Heart right ventricle (tissue), 16 donors: ENCODE measurements at regions of chr6 and their contacts with region 1.

Region 1: GRCh38 chr6:157191067-157191466 is 132.3 kb downstream of the TMEM242 start:
- DNase-seq: no peak
- ATAC-seq: no peak
- H3K4me3 ChIP-seq: no peak overlapping the region
- H3K27ac ChIP-seq: no peak overlapping the region
- H3K4me1 ChIP-seq: peaks cover 0 to 23% (median 15%) of the 10 kb centered on the region in 9 donors
- H3K27me3 ChIP-seq: no peaks in the 10 kb centered on the region
- CTCF ChIP-seq: no peak

Region 2: DNA sequence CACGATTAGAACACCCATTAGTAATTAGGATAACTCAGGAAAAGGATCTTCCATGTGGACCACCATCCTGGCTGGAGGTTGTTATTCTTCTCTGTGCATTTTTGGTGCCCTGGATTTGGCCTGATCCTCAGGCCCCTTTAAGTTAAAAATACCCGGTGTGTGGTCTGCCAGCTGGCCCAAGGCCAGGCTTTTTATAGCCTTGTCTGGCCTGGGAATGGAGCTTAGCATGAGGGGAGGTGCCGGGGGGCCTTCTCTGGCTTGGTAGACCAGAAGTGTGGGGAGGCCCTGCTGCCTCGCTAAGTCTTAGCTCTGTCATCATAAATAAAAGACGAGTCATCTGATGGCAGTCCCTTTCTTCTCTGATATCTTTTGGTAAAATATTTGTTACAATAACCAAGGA is 342.5 kb before region 1 on chr6:
- intact Hi-C with region 1: no loop called
- DNase-seq: peak; percentile 81 to 89
- ATAC-seq: peak; percentile 82 to 91 (median 85)
- H3K4me3 ChIP-seq: peak overlapping the region in 5 of 10 donors; percentile 5 to 20 (median 9)
- H3K27ac ChIP-seq: peak overlapping the region in 9 of 10 donors; percentile 2 to 78 (median 66)
- H3K4me1 ChIP-seq: peaks cover 35 to 100% (median 99%) of the 10 kb centered on the region in 9 donors
- H3K27me3 ChIP-seq: no peaks in the 10 kb centered on the region
- CTCF ChIP-seq: no peak

Region 3: GRCh38 chr6:157205473-157206358 is 14.6 kb after region 1 on chr6:
- intact Hi-C with region 1: loop called in 1 of 10 experiments (anchors 1 kb)
- DNase-seq: no peak
- ATAC-seq: no peak
- H3K4me3 ChIP-seq: no peak overlapping the region
- H3K27ac ChIP-seq: no peak overlapping the region
- H3K4me1 ChIP-seq: no peaks in the 10 kb centered on the region
- H3K27me3 ChIP-seq: no peaks in the 10 kb centered on the region
- CTCF ChIP-seq: no peak